ENCODE measurements at regions of chr4 and their contacts with region 1.

Region 1: DNA sequence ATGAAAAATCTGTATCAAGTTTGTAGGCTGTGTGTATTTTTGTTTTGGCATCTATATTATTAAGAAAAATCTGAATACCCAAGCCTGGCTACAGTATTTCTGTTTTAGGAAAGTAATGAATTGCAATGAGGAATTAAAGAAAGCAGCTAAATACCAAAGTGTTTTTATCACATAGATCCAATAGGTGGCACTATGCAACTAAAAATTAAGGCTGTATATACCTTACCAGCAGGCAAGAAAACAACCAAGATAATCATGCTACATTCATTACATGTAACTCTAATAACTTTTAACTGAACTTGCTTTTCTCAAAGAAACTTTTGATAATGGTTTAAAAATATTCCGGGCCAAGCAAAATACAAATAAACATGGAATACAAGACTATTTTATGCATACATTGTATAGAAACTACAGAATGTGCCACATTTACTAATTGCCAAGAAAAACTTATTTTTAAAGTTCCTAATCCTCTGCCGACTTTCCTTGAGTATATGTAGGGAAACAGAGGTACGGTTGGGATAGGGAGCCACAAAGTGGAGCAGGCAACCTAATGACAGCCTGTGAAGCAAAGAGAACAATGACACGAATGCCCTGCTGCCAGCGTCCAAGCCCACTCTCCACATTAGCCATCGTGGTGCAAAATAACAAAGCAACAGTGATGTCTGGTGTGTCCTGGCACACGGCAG is 63.7 kb downstream of the SEC24D start:
- DNase-seq: no peak
- H3K4me3 ChIP-seq: no peak overlapping the region
- H3K27ac ChIP-seq: peak overlapping the region in 2 of 3 donors; percentile 6 to 24
- H3K4me1 ChIP-seq: peaks cover 11 to 14% of the 10 kb centered on the region in 2 donors
- H3K27me3 ChIP-seq: no peaks in the 10 kb centered on the region
- CTCF ChIP-seq: peak in 5 of 6 experiments; percentile 36 to 63 (median 56)
- POLR2A ChIP-seq: no peak

Region 2: DNA sequence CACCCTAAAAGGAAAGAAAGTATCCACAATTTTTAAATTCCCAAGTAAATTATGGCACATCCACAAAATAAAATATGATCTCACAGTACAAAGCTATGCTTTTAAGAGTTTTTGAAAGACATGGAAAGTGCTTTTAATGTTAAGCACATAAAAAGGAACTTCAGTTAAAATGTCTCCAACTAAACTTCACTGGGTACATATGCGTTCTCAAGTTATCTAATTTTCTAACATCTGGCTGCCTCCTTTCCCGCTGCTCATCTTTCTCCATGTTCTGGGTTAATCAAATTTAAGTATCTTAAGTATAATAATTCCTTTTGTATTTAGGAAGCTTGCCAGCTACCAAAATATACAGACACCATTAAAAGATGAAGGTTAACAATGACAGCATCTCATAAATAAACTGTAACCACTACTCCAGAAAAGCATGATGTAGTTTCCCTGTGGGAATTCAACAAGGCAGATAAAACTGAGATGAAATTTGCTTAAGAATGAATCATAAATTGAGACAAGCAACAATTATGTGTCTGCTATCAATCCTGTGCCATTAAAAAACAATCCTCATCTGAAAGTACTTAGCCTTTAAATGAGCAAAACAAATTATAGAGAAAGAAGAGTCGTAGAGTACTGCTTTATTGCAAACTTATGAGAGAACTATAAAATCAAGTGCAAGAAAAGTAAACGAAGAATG is 444.5 kb before region 1 on chr4:
- intact Hi-C with region 1: no loop called
- DNase-seq: no peak
- H3K4me3 ChIP-seq: no peak overlapping the region
- H3K27ac ChIP-seq: no peak overlapping the region
- H3K4me1 ChIP-seq: no peaks in the 10 kb centered on the region
- H3K27me3 ChIP-seq: no peaks in the 10 kb centered on the region
- CTCF ChIP-seq: no peak
- POLR2A ChIP-seq: no peak

Region 3: GRCh38 chr4:118888666-118889311 is 116.6 kb after region 1 on chr4 and contains the start of gene SYNPO2:
- intact Hi-C with region 1: loop called (anchors 10 kb)
- DNase-seq: peak; percentile 71 to 82
- H3K4me3 ChIP-seq: peak within 1 kb of the TSS; percentile 0 to 25 (median 6)
- H3K27ac ChIP-seq: peak within 1 kb of the TSS in 2 of 3 donors; percentile 26 to 30
- H3K4me1 ChIP-seq: no peaks in the 10 kb centered on the region
- H3K27me3 ChIP-seq: no peaks in the 10 kb centered on the region
- CTCF ChIP-seq: no peak
- POLR2A ChIP-seq: peak in 1 of 2 donors; percentile 79
- total RNA-seq, gene SYNPO2: 11.4 to 37.8 (median 23.8) TPM